HepG2 (cell line): ENCODE measurements at regions of chr13 and their contacts with region 1.

Region 1: GRCh38 chr13:59710991-59711701 is 452.6 kb downstream of the DIAPH3 start:
- DNase-seq: no peak
- ATAC-seq: no peak
- H3K4me3 ChIP-seq: no peak overlapping the region
- H3K27ac ChIP-seq: no peak overlapping the region
- H3K4me1 ChIP-seq: peaks cover 32% of the 10 kb centered on the region
- H3K27me3 ChIP-seq: no peaks in the 10 kb centered on the region
- CTCF ChIP-seq: no peak
- EP300 ChIP-seq: no peak
- POLR2A ChIP-seq: no peak
- RAD21 ChIP-seq: no peak

Region 2: GRCh38 chr13:59690857-59691500 is 20.2 kb before region 1 on chr13:
- CTCF ChIA-PET with region 1: no interaction called
- POLR2A ChIA-PET with region 1: no interaction called
- in situ Hi-C with region 1: no loop called
- intact Hi-C with region 1: loop called (anchors 2 kb)
- DNase-seq: peak; percentile 79
- ATAC-seq: peak; percentile 89
- H3K4me3 ChIP-seq: no peak overlapping the region
- H3K27ac ChIP-seq: peak overlapping the region; percentile 78
- H3K4me1 ChIP-seq: peaks cover 50% of the 10 kb centered on the region
- H3K27me3 ChIP-seq: no peaks in the 10 kb centered on the region
- CTCF ChIP-seq: no peak
- EP300 ChIP-seq: peak in 1 of 2 experiments; percentile 71; a peak in 1 of 4 replicates
- POLR2A ChIP-seq: no peak
- RAD21 ChIP-seq: no peak

Region 3: DNA sequence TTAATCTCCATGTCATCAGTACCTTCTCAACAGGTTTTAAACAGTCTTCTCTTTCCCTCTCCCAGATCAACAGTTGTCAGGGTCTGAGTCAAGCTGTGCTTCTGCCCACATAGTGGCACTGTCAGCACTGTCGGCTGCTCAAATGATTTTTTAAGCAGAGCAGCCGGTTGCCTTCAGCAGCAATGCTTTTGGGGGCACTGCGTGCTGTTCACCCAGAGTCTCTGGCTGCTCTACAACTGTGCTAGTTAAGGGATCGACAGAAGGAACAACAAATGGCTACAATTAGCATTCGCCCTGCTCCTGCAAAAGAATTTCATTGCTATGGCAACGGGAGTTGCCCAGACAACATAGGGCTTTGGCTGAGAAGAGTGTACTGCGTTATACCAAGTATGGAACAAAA is 39.7 kb after region 1 on chr13:
- CTCF ChIA-PET with region 1: no interaction called
- POLR2A ChIA-PET with region 1: no interaction called
- in situ Hi-C with region 1: no loop called
- intact Hi-C with region 1: no loop called
- DNase-seq: no peak
- ATAC-seq: no peak
- H3K4me3 ChIP-seq: no peak overlapping the region
- H3K27ac ChIP-seq: no peak overlapping the region
- H3K4me1 ChIP-seq: no peaks in the 10 kb centered on the region
- H3K27me3 ChIP-seq: no peaks in the 10 kb centered on the region
- CTCF ChIP-seq: no peak
- EP300 ChIP-seq: no peak
- POLR2A ChIP-seq: no peak
- RAD21 ChIP-seq: no peak